CD4-positive, alpha-beta T cell (primary cell): ENCODE measurements at regions of chr10 and their contacts with region 1.

Region 1: DNA sequence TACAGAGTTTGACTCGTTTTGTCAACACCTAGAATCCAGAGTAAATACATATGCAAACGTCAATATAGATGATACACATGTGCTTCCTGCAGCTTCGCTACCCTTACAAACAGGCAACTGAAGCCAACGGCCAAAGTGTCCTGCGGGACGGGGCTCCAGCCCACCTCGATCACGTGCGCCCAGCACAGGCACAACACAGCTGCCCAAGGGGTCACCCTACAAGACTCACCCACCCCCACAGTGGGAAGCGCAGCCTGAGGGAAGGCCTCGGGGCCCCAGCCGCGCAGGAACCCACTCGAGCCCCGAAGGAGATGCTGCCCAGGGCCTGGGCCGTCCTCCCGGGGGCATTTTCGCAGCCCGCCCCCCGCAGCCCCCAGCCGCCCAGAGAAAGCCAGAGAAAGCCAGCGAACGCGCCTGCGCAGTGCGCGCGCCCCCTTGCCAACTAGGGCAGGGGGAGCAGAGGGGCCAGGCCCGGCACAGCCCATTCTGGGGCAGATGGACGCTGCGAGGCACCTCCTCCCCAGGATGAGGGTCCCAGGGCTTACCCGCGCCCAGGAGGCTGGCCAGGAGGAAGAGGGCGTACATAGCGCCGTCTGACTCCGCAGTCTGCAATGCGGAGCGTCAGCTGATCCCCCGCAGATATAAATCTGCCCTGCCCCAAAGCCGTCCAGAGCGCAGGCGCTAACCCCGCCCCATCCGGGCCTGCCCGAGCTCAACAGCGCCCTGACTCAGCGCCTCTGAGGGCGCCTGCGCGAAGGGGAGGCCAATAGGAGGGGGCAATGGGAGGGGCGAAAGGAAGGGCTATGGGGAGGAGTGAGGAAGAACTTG is at the start of gene PSAP:
- DNase-seq: peak; percentile 97 to 99 (median 98)
- ATAC-seq: peak; percentile 96
- H3K4me3 ChIP-seq: peak within 1 kb of the TSS; percentile 99
- H3K4me3 Mint-ChIP-seq: peak within 1 kb of the TSS; percentile 96
- H3K27ac ChIP-seq: peak within 1 kb of the TSS; percentile 47 to 85
- H3K27ac Mint-ChIP-seq: peak within 1 kb of the TSS; percentile 85
- H3K4me1 ChIP-seq: peaks cover 33% of the 10 kb centered on the region
- H3K4me1 Mint-ChIP-seq: peaks cover 51% of the 10 kb centered on the region
- H3K27me3 ChIP-seq: no peaks in the 10 kb centered on the region
- H3K27me3 Mint-ChIP-seq: no peaks in the 10 kb centered on the region
- CTCF ChIP-seq: no peak
- total RNA-seq, gene PSAP: 191 to 206 TPM

Region 2: GRCh38 chr10:71209352-71209715 is 641.5 kb before region 1 on chr10:
- CTCF ChIA-PET with region 1: no interaction called
- POLR2A ChIA-PET with region 1: no interaction called
- intact Hi-C with region 1: no loop called
- DNase-seq: no peak
- ATAC-seq: no peak
- H3K4me3 ChIP-seq: no peak overlapping the region
- H3K4me3 Mint-ChIP-seq: no peak overlapping the region
- H3K27ac ChIP-seq: no peak overlapping the region
- H3K27ac Mint-ChIP-seq: no peak overlapping the region
- H3K4me1 ChIP-seq: peaks cover 18% of the 10 kb centered on the region
- H3K4me1 Mint-ChIP-seq: peaks cover 4% of the 10 kb centered on the region
- H3K27me3 ChIP-seq: peaks cover 49 to 52% of the 10 kb centered on the region in 2 experiments
- H3K27me3 Mint-ChIP-seq: peaks cover 78% of the 10 kb centered on the region
- CTCF ChIP-seq: no peak

Region 3: DNA sequence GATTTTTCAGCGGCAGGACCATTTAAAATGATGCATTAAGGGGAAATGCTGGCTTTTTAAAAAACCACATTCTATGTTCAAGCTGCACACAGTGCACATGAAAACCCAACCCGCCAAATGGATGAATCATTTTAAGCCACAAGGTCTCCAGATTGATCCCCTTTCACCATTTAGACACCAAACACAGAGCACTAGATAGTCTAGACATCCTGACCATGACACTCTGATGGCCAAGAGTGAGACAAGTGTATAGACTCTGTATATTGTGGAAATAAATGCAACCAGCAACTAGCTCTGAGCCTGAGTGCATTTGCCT is 28.4 kb before region 1 on chr10:
- CTCF ChIA-PET with region 1: no interaction called
- POLR2A ChIA-PET with region 1: no interaction called
- intact Hi-C with region 1: no loop called
- DNase-seq: no peak
- ATAC-seq: no peak
- H3K4me3 ChIP-seq: no peak overlapping the region
- H3K4me3 Mint-ChIP-seq: no peak overlapping the region
- H3K27ac ChIP-seq: no peak overlapping the region
- H3K27ac Mint-ChIP-seq: no peak overlapping the region
- H3K4me1 ChIP-seq: no peaks in the 10 kb centered on the region
- H3K4me1 Mint-ChIP-seq: no peaks in the 10 kb centered on the region
- H3K27me3 ChIP-seq: no peaks in the 10 kb centered on the region
- H3K27me3 Mint-ChIP-seq: no peaks in the 10 kb centered on the region
- CTCF ChIP-seq: no peak

Region 4: GRCh38 chr10:71835671-71836595 is 14.9 kb before region 1 on chr10:
- CTCF ChIA-PET with region 1: interaction called, 3 read pairs
- POLR2A ChIA-PET with region 1: interaction called, 27 read pairs
- intact Hi-C with region 1: no loop called
- DNase-seq: peak in 1 of 14 experiments; percentile 42
- ATAC-seq: no peak
- H3K4me3 ChIP-seq: no peak overlapping the region
- H3K4me3 Mint-ChIP-seq: no peak overlapping the region
- H3K27ac ChIP-seq: no peak overlapping the region
- H3K27ac Mint-ChIP-seq: peak overlapping the region; percentile 45
- H3K4me1 ChIP-seq: peaks cover 40% of the 10 kb centered on the region
- H3K4me1 Mint-ChIP-seq: peaks cover 52% of the 10 kb centered on the region
- H3K27me3 ChIP-seq: no peaks in the 10 kb centered on the region
- H3K27me3 Mint-ChIP-seq: no peaks in the 10 kb centered on the region
- CTCF ChIP-seq: no peak

Region 5: GRCh38 chr10:72625608-72626443 is 775.0 kb after region 1 on chr10 and contains the start of gene MICU1:
- CTCF ChIA-PET with region 1: no interaction called
- POLR2A ChIA-PET with region 1: no interaction called
- intact Hi-C with region 1: loop called in 1 of 2 experiments (anchors 10 kb)
- DNase-seq: peak; percentile 85 to 97 (median 92)
- ATAC-seq: peak; percentile 99
- H3K4me3 ChIP-seq: peak within 1 kb of the TSS; percentile 92
- H3K4me3 Mint-ChIP-seq: peak within 1 kb of the TSS; percentile 99
- H3K27ac ChIP-seq: peak within 1 kb of the TSS; percentile 15 to 42
- H3K27ac Mint-ChIP-seq: peak within 1 kb of the TSS; percentile 83
- H3K4me1 ChIP-seq: peaks cover 16% of the 10 kb centered on the region
- H3K4me1 Mint-ChIP-seq: peaks cover 26% of the 10 kb centered on the region
- H3K27me3 ChIP-seq: no peaks in the 10 kb centered on the region
- H3K27me3 Mint-ChIP-seq: no peaks in the 10 kb centered on the region
- CTCF ChIP-seq: no peak
- total RNA-seq, gene MICU1: 9.4 to 12.1 TPM